GM12878 (cell line): ENCODE measurements at regions of chr9 and their contacts with region 1.

Region 1: DNA sequence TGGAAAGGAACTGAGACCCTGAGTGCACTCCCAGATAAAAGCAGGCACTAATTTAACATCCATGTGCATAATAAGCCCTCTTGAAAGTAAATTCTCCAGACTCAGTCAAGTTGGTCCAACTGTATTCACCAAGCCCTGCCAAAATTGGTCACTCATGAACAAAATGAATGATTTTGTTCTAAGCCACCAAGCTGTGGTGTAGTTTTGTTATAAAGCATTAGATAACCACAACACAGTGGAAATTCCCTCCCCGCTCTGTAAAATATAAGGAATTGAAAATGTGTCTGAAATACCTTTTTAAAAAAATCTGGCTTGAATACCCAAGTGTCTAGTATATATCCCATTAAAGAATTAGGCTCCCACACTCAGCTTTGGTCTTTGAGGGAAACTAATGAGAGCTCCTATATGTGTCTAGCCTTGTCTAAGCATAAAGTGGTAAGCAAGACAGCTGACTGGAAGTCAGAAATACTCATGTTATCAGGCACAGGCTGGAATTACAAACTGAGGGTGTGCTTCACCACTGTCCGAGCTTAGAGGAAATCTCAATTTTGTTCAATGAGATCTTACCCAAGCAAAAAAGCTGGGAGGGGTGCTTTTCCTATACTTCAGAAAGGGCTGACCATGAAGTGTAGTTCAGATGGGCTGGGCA is 33.2 kb downstream of the IDNK start:
- DNase-seq: peak; percentile 37
- ATAC-seq: peak; percentile 87
- H3K4me3 ChIP-seq: no peak overlapping the region
- H3K27ac ChIP-seq: peak overlapping the region; percentile 73
- H3K4me1 ChIP-seq: peaks cover 30% of the 10 kb centered on the region
- H3K27me3 ChIP-seq: no peaks in the 10 kb centered on the region
- CTCF ChIP-seq: no peak
- EP300 ChIP-seq: no peak
- POLR2A ChIP-seq: no peak
- RAD21 ChIP-seq: no peak

Region 2: GRCh38 chr9:83304686-83305085 is 351.5 kb before region 1 on chr9:
- CTCF ChIA-PET with region 1: no interaction called
- POLR2A ChIA-PET with region 1: no interaction called
- RAD21 ChIA-PET with region 1: no interaction called
- SMC1A ChIA-PET with region 1: no interaction called
- in situ Hi-C with region 1: no loop called
- intact Hi-C with region 1: no loop called
- DNase-seq: no peak
- ATAC-seq: no peak
- H3K4me3 ChIP-seq: no peak overlapping the region
- H3K27ac ChIP-seq: no peak overlapping the region
- H3K4me1 ChIP-seq: no peaks in the 10 kb centered on the region
- H3K27me3 ChIP-seq: no peaks in the 10 kb centered on the region
- CTCF ChIP-seq: no peak
- EP300 ChIP-seq: no peak
- POLR2A ChIP-seq: no peak
- RAD21 ChIP-seq: no peak

Region 3: DNA sequence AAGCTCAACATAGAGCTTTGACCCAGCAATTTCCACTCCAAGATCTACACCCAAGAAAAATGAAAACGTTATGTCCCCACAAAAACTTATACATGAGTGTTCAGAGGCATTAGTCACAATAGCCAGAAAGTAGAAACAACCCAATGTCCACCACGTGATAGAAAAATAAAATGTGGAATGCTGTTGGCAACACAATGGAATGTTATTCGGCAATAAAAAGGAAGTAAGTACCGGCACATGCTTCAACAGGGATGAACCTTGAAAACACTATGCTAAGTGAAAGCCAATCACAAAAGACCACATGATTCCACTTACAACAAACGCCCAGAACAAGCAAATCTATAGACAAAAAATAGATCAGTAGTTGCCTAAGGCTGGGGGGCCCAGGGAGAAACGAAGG is 45.6 kb after region 1 on chr9:
- CTCF ChIA-PET with region 1: interaction called, 5 read pairs
- POLR2A ChIA-PET with region 1: interaction called, 9 read pairs
- RAD21 ChIA-PET with region 1: interaction called, 4 read pairs
- SMC1A ChIA-PET with region 1: interaction called, 3 read pairs
- in situ Hi-C with region 1: no loop called
- intact Hi-C with region 1: loop called (anchors 5 kb)
- DNase-seq: no peak
- ATAC-seq: peak; percentile 26
- H3K4me3 ChIP-seq: peak overlapping the region; percentile 58
- H3K27ac ChIP-seq: peak overlapping the region; percentile 38; the same call in 1 of the 2 replicates
- H3K4me1 ChIP-seq: peaks cover 22% of the 10 kb centered on the region
- H3K27me3 ChIP-seq: no peaks in the 10 kb centered on the region
- CTCF ChIP-seq: no peak
- EP300 ChIP-seq: no peak
- POLR2A ChIP-seq: no peak
- RAD21 ChIP-seq: no peak